ENCODE measurements at regions of chr4 and their contacts with region 1.

Region 1: GRCh38 chr4:175536852-175537453 is 275.1 kb downstream of the GPM6A start:
- DNase-seq: peak; percentile 72
- H3K4me3 Mint-ChIP-seq: no peak overlapping the region
- H3K27ac Mint-ChIP-seq: no peak overlapping the region
- H3K4me1 Mint-ChIP-seq: peaks cover 6% of the 10 kb centered on the region
- H3K27me3 Mint-ChIP-seq: no peaks in the 10 kb centered on the region
- CTCF ChIP-seq: peak; percentile 63

Region 2: DNA sequence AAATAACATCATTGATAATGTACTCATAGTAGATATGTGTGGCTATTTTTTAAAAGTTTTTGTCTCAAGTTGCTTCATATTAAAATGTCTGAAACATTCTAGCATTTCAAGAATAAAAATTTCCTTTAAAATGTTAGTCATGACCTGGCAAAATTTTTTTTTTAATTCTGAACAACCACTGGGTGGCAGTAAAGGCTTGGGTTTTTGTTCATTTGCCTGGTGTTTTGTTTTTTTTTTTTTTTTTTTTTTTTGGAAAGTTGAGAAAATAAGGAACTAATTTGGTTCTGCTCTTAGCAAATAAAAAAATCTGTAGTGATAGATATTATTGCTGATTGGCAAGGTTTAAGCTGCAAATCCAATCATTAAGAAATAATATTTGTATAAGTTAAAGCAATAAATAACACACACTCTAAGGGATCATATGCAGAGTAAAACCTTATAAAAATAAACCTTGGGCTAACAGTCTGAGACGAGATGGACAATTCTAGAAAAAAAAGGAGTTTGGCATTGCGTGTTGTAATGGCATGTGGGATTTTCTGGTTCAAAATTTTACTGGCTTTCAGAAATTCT is 1171.8 kb before region 1 on chr4:
- CTCF ChIA-PET with region 1: no interaction called
- POLR2A ChIA-PET with region 1: no interaction called
- intact Hi-C with region 1: loop called (anchors 10 kb)
- DNase-seq: peak; percentile 54
- H3K4me3 Mint-ChIP-seq: no peak overlapping the region
- H3K27ac Mint-ChIP-seq: no peak overlapping the region
- H3K4me1 Mint-ChIP-seq: no peaks in the 10 kb centered on the region
- H3K27me3 Mint-ChIP-seq: no peaks in the 10 kb centered on the region
- CTCF ChIP-seq: peak; percentile 41

Region 3: GRCh38 chr4:174764105-174764729 is 772.7 kb before region 1 on chr4:
- CTCF ChIA-PET with region 1: interaction called, 51 read pairs
- POLR2A ChIA-PET with region 1: interaction called, 8 read pairs
- intact Hi-C with region 1: loop called (anchors 1 kb)
- DNase-seq: peak; percentile 59
- H3K4me3 Mint-ChIP-seq: no peak overlapping the region
- H3K27ac Mint-ChIP-seq: no peak overlapping the region
- H3K4me1 Mint-ChIP-seq: no peaks in the 10 kb centered on the region
- H3K27me3 Mint-ChIP-seq: no peaks in the 10 kb centered on the region
- CTCF ChIP-seq: peak; percentile 56

Region 4: GRCh38 chr4:174873931-174874330 is 663.0 kb before region 1 on chr4:
- CTCF ChIA-PET with region 1: interaction called, 11 read pairs
- POLR2A ChIA-PET with region 1: no interaction called
- intact Hi-C with region 1: loop called (anchors 1 kb)
- DNase-seq: peak; percentile 63
- H3K4me3 Mint-ChIP-seq: no peak overlapping the region
- H3K27ac Mint-ChIP-seq: no peak overlapping the region
- H3K4me1 Mint-ChIP-seq: no peaks in the 10 kb centered on the region
- H3K27me3 Mint-ChIP-seq: no peaks in the 10 kb centered on the region
- CTCF ChIP-seq: peak; percentile 37

Region 5: GRCh38 chr4:175253184-175253902 is 283.6 kb before region 1 on chr4:
- CTCF ChIA-PET with region 1: interaction called, 6 read pairs
- POLR2A ChIA-PET with region 1: no interaction called
- intact Hi-C with region 1: loop called (anchors 1 kb)
- DNase-seq: peak; percentile 56
- H3K4me3 Mint-ChIP-seq: no peak overlapping the region
- H3K27ac Mint-ChIP-seq: no peak overlapping the region
- H3K4me1 Mint-ChIP-seq: no peaks in the 10 kb centered on the region
- H3K27me3 Mint-ChIP-seq: no peaks in the 10 kb centered on the region
- CTCF ChIP-seq: peak; percentile 35

Region 6: GRCh38 chr4:175419239-175419767 is 117.7 kb before region 1 on chr4:
- CTCF ChIA-PET with region 1: no interaction called
- POLR2A ChIA-PET with region 1: no interaction called
- intact Hi-C with region 1: loop called (anchors 1 kb)
- DNase-seq: peak; percentile 90
- H3K4me3 Mint-ChIP-seq: no peak overlapping the region
- H3K27ac Mint-ChIP-seq: peak overlapping the region; percentile 94
- H3K4me1 Mint-ChIP-seq: peaks cover 40% of the 10 kb centered on the region
- H3K27me3 Mint-ChIP-seq: no peaks in the 10 kb centered on the region
- CTCF ChIP-seq: no peak

Region 7: DNA sequence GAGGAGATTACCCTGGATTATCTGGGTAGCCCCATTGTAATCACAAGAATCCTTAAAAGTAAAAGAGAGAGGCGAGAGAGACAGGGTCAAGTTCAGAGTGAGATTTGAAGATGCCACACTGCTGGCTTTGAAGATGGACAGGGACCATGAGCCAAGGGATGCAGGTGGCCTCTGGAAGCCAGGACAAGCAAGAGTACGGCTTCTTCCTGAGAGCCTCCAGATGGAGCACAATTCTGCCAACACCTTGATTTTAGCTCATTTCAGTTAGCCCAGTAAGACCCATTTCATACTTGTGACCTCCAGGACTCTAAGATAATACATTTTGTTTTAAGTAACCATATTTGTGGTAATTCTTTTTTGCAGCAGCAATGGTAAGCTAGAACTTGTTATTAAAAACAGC is 154.8 kb after region 1 on chr4:
- CTCF ChIA-PET with region 1: no interaction called
- POLR2A ChIA-PET with region 1: no interaction called
- intact Hi-C with region 1: no loop called
- DNase-seq: no peak
- H3K4me3 Mint-ChIP-seq: no peak overlapping the region
- H3K27ac Mint-ChIP-seq: no peak overlapping the region
- H3K4me1 Mint-ChIP-seq: no peaks in the 10 kb centered on the region
- H3K27me3 Mint-ChIP-seq: no peaks in the 10 kb centered on the region
- CTCF ChIP-seq: no peak